Left lung (tissue), 14 donors: ENCODE measurements at regions of chr5 and their contacts with region 1.

Region 1: GRCh38 chr5:169980418-169981053 is at the start of gene INSYN2B:
- DNase-seq: peak in 3 of 4 donors; percentile 40 to 88 (median 88)
- ATAC-seq: peak; percentile 94
- H3K4me3 ChIP-seq: peak within 1 kb of the TSS in 1 of 2 donors; percentile 1
- H3K27ac ChIP-seq: no peak within 1 kb of the TSS
- H3K4me1 ChIP-seq: no peaks in the 10 kb centered on the region
- H3K27me3 ChIP-seq: peaks cover 4 to 11% of the 10 kb centered on the region in 2 donors
- CTCF ChIP-seq: peak; percentile 45 to 63
- polyA plus RNA-seq, gene INSYN2B: 3.8 to 7.0 (median 4.4) TPM

Region 2: GRCh38 chr5:169701910-169702451 is 278.6 kb before region 1 on chr5:
- intact Hi-C with region 1: loop called in 1 of 2 experiments (anchors 10 kb)
- DNase-seq: peak in 2 of 4 donors; percentile 43 to 55
- ATAC-seq: no peak
- H3K4me3 ChIP-seq: no peak overlapping the region
- H3K27ac ChIP-seq: no peak overlapping the region
- H3K4me1 ChIP-seq: no peaks in the 10 kb centered on the region
- H3K27me3 ChIP-seq: no peaks in the 10 kb centered on the region
- CTCF ChIP-seq: peak; percentile 11 to 35

Region 3: DNA sequence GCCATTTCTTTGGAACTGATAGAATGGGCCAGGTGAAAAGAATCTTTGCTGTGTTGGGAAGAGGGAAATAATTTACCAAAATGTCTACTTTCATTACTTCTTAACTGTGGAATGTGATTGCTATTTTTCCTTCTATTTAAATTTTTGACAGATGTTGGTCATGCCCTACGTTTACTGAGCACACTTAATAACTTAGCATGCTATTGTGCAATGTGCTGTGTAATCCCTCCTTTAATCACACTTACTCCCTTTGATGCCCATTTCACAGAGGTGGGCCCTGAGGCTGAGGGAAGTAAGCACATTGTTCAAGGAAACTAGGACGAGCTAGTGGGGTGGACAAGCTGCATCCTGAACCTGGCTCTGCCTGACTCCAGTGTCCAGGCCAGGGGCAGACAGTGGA is 47.6 kb after region 1 on chr5:
- intact Hi-C with region 1: no loop called
- DNase-seq: no peak
- ATAC-seq: no peak
- H3K4me3 ChIP-seq: no peak overlapping the region
- H3K27ac ChIP-seq: no peak overlapping the region
- H3K4me1 ChIP-seq: no peaks in the 10 kb centered on the region
- H3K27me3 ChIP-seq: no peaks in the 10 kb centered on the region
- CTCF ChIP-seq: no peak

Region 4: GRCh38 chr5:170056561-170057267 is 76.2 kb after region 1 on chr5:
- intact Hi-C with region 1: no loop called
- DNase-seq: no peak
- ATAC-seq: peak; percentile 70
- H3K4me3 ChIP-seq: no peak overlapping the region
- H3K27ac ChIP-seq: no peak overlapping the region
- H3K4me1 ChIP-seq: no peaks in the 10 kb centered on the region
- H3K27me3 ChIP-seq: no peaks in the 10 kb centered on the region
- CTCF ChIP-seq: no peak

Region 5: GRCh38 chr5:170100066-170100943 is 119.8 kb after region 1 on chr5:
- intact Hi-C with region 1: no loop called
- DNase-seq: peak in 3 of 4 donors; percentile 65 to 90 (median 82)
- ATAC-seq: peak; percentile 85
- H3K4me3 ChIP-seq: no peak overlapping the region
- H3K27ac ChIP-seq: no peak overlapping the region
- H3K4me1 ChIP-seq: peaks cover 0 to 32% of the 10 kb centered on the region in 2 donors
- H3K27me3 ChIP-seq: no peaks in the 10 kb centered on the region
- CTCF ChIP-seq: peak; percentile 66 to 68